Psoas muscle (tissue), 8 donors: ENCODE measurements at regions of chr15 and their contacts with region 1.

Region 1: GRCh38 chr15:57118013-57118799 is 199.8 kb downstream of the TCF12 start:
- DNase-seq: no peak
- ATAC-seq: peak; percentile 54 to 89 (median 76)
- H3K4me3 ChIP-seq: no peak overlapping the region
- H3K27ac ChIP-seq: no peak overlapping the region
- H3K4me1 ChIP-seq: peaks cover 24% of the 10 kb centered on the region
- H3K27me3 ChIP-seq: no peaks in the 10 kb centered on the region
- CTCF ChIP-seq: no peak

Region 2: DNA sequence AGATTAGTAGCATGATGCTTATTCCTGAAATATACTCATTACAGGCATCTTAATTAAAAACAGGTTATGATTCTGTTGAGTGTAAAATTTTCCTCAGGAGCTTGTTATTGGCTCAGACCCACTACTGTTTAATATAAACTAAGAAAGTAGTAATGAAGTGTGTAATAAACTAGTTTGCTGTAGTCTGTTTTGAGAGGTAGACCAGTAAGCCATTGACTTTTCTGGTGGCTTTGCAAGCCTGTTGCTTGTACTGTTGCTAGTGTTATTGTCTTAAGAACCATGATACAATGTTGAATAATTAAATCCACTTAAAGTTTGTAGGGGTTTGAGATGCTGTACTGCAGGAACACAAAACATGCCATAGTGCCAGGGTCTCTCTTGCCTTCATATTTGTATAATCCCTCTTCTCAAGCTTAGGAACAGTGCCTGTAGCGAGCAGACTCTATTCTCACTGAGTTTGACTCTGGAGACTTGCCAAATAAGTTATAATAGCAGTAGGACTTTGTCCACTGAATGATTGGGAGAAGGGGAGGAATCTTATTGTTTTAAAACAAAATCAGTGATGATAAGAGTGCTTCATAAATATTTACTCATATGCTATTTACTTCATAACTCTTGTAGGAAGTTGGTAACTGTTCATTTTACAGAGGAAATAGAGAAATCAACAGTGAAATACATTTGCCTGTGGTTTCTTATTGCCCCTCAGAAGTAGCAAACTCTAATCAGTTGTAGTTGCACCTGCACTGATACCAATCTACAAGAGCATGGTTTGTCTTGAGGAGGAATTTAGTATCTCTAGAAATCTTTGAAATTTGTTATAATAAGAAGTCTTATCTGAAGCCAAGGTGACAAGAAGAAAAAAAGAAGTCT is 186.3 kb before region 1 on chr15:
- intact Hi-C with region 1: loop called (anchors 10 kb)
- DNase-seq: no peak
- ATAC-seq: peak in 3 of 4 donors; percentile 39 to 43 (median 40)
- H3K4me3 ChIP-seq: no peak overlapping the region
- H3K27ac ChIP-seq: no peak overlapping the region
- H3K4me1 ChIP-seq: peaks cover 73% of the 10 kb centered on the region
- H3K27me3 ChIP-seq: no peaks in the 10 kb centered on the region
- CTCF ChIP-seq: no peak

Region 3: GRCh38 chr15:57045741-57046382 is 72.3 kb before region 1 on chr15:
- intact Hi-C with region 1: loop called in 1 of 2 experiments (anchors 10 kb)
- DNase-seq: no peak
- ATAC-seq: no peak
- H3K4me3 ChIP-seq: no peak overlapping the region
- H3K27ac ChIP-seq: no peak overlapping the region
- H3K4me1 ChIP-seq: peaks cover 28% of the 10 kb centered on the region
- H3K27me3 ChIP-seq: no peaks in the 10 kb centered on the region
- CTCF ChIP-seq: no peak

Region 4: DNA sequence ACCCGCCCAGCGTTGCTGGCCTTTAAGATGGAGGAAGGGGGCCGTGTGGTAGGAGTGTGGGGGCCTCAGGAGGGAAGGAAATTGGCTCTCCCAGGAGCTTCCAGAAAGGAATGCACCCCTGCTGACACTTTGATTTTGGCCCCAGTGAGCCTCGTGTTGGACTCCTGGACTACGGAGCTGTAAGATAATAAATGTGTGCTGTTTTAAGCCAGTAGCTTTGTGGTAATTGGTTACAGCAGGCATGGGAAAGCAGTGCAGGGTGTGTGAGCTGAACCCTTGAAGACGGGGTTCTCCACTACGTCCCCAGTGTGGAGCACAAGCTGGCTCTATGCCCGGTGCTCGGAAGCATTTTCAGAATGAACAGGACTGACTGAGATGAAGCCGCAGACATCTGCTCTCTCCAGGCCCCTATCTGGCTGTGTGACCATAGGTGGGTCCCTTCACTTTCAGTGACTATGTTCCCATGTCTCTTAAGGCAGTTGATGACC is 235.2 kb after region 1 on chr15:
- intact Hi-C with region 1: no loop called
- DNase-seq: no peak
- ATAC-seq: no peak
- H3K4me3 ChIP-seq: no peak overlapping the region
- H3K27ac ChIP-seq: no peak overlapping the region
- H3K4me1 ChIP-seq: no peaks in the 10 kb centered on the region
- H3K27me3 ChIP-seq: peaks cover 0 to 7% (median 0%) of the 10 kb centered on the region in 3 donors
- CTCF ChIP-seq: no peak

Region 5: GRCh38 chr15:57510647-57511046 is 392.4 kb after region 1 on chr15:
- intact Hi-C with region 1: no loop called
- DNase-seq: no peak
- ATAC-seq: no peak
- H3K4me3 ChIP-seq: no peak overlapping the region
- H3K27ac ChIP-seq: no peak overlapping the region
- H3K4me1 ChIP-seq: no peaks in the 10 kb centered on the region
- H3K27me3 ChIP-seq: no peaks in the 10 kb centered on the region
- CTCF ChIP-seq: no peak